Activated CD8-positive, alpha-beta memory T cell treated with anti-CD3 and anti-CD28 coated beads, Interleukin-2, amount 10 ng/mL, durations not matched to agents 7 days and 5 days (primary cell): ENCODE measurements at regions of chr6 and their contacts with region 1.

Region 1: DNA sequence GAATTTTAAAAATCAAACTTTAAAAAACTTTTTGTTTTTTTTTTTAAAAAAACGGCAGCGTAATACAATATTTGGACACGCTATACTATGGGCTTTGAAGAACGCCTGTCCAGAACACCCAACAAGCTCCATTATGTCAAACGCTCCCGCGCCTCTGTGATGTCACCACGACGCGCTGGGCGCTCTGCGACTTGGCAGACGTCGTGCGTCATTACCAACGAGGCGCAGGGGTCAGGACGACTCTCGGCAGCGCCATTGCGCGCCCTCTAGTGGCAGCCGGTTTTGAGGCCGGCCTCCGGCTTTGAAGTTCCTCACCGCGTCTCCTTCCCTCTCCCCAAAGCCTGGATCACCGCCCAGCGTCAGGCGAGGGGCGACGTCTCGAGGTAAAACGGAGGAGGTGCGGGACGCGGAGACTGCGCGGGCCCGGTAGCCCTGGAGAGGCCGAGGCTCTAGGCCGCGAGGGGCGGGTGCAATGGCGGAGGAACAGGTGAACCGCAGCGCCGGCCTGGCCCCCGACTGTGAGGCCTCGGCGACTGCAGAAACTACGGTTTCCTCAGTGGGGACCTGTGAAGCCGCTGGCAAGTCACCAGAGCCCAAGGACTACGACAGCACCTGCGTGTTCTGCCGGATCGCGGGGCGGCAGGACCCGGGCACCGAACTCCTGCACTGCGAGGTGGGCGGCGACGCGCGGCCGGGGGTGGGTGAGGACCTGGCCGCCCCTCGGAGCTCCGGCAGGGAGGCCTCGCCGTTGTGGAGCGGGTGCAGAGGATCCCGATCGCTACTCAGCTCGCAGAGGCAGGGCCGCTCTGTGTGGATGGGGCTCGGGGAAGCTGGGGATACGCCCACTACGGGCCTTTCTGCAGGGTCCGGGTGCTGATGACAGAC is at the start of gene HINT3:
- DNase-seq: peak; percentile 98
- ATAC-seq: peak; percentile 93
- H3K4me3 Mint-ChIP-seq: no peak within 1 kb of the TSS
- H3K27ac Mint-ChIP-seq: peak within 1 kb of the TSS; percentile 76
- H3K4me1 Mint-ChIP-seq: peaks cover 10% of the 10 kb centered on the region
- H3K27me3 Mint-ChIP-seq: peaks cover 6% of the 10 kb centered on the region
- total RNA-seq, gene HINT3: 8.7 to 9.3 TPM

Region 2: GRCh38 chr6:125779924-125780539 is 176.7 kb before region 1 on chr6:
- CTCF ChIA-PET with region 1: interaction called, 43 read pairs
- DNase-seq: peak; percentile 87
- ATAC-seq: peak; percentile 81
- H3K4me3 Mint-ChIP-seq: no peak overlapping the region
- H3K27ac Mint-ChIP-seq: no peak overlapping the region
- H3K4me1 Mint-ChIP-seq: peaks cover 17% of the 10 kb centered on the region
- H3K27me3 Mint-ChIP-seq: peaks cover 20% of the 10 kb centered on the region

Region 3: DNA sequence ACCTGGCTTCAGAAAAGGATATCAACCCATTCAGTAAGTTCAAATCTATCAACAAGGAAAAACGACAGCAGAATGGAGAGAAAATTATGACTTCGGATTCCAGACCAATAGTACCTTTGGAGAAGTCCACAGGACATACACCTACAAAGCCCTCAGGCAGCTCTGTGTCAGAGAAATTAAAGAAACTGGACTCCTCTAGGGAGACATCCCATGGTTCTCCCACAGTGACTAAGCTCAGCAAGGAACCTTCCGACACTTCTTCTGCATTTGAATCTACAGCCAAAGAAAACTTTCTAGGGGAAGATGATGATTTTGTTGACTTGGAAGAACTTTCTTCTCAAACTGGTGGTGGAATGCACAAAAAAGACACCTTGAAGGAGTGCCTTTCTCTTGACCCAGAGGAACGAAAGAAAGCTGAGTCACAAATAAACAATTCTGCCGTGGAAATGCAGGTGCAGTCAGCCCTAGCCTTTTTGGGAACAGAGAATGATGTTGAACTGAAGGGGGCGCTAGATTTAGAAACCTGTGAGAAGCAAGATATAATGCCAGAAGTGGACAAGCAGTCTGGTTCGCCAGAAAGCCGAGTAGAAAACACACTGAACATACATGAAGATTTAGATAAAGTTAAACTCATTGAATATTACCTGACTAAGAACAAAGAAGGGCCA is 67.6 kb before region 1 on chr6:
- CTCF ChIA-PET with region 1: interaction called, 13 read pairs
- DNase-seq: no peak
- ATAC-seq: no peak
- H3K4me3 Mint-ChIP-seq: no peak overlapping the region
- H3K27ac Mint-ChIP-seq: no peak overlapping the region
- H3K4me1 Mint-ChIP-seq: no peaks in the 10 kb centered on the region
- H3K27me3 Mint-ChIP-seq: no peaks in the 10 kb centered on the region

Region 4: DNA sequence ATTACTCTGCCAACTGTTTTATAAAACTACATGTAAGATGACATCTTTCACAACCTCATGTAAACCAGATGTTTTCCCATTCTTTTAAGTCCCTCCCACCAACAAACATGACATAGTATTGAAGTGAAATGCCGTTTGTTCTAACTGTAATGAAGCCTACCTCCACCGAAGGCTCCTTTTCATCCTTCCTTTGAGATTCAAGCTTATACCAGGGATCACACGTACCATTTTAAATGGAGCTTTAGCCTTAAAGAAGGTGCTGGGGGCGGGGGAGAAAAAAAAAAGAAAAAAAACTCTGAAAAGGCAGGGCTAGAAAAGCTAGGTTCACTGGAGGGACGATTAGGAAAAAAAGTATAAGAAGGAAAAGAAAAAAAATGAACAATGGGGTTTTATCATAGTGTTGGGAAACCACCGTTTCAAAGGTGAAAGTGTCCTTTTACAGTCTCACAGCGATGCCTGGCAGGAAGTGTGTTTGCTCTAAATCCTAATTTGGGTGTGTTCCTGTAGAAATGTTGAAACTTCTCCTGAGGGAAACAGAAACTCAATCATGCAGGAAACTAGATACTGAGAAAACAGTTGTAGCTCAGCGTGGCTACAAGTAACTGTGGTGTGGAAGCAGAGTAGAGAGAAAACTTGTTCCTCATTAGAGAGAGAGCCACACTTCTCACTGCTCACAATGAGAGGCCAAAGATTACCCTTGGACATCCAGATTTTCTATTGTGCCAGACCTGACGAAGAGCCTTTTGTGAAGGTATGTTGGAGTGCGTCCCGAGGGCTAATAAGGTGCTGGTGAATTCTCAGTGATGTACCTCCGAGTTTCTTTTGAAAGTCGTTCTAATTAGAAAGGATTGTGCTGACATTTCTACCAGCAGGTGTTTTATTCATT is 37.8 kb before region 1 on chr6:
- CTCF ChIA-PET with region 1: interaction called, 39 read pairs
- DNase-seq: peak; percentile 73
- ATAC-seq: peak; percentile 94
- H3K4me3 Mint-ChIP-seq: peak overlapping the region; percentile 85
- H3K27ac Mint-ChIP-seq: peak overlapping the region; percentile 91
- H3K4me1 Mint-ChIP-seq: peaks cover 44% of the 10 kb centered on the region
- H3K27me3 Mint-ChIP-seq: no peaks in the 10 kb centered on the region

Region 5: GRCh38 chr6:125974214-125974866 is 17.6 kb after region 1 on chr6:
- CTCF ChIA-PET with region 1: interaction called, 32 read pairs
- DNase-seq: no peak
- ATAC-seq: peak; percentile 69
- H3K4me3 Mint-ChIP-seq: no peak overlapping the region
- H3K27ac Mint-ChIP-seq: peak overlapping the region; percentile 8
- H3K4me1 Mint-ChIP-seq: peaks cover 5% of the 10 kb centered on the region
- H3K27me3 Mint-ChIP-seq: no peaks in the 10 kb centered on the region